Activated B cell treated with CpG ODN at 0.5 μM for 24 hours (primary cell): ENCODE measurements at regions of chr1 and their contacts with region 1.

Region 1: GRCh38 chr1:36149237-36149972 is at the start of gene TRAPPC3:
- DNase-seq: peak; percentile 96
- ATAC-seq: peak; percentile 89
- H3K4me3 Mint-ChIP-seq: peak within 1 kb of the TSS; percentile 94
- H3K27ac Mint-ChIP-seq: peak within 1 kb of the TSS; percentile 95
- H3K4me1 Mint-ChIP-seq: peaks cover 55% of the 10 kb centered on the region
- H3K27me3 Mint-ChIP-seq: no peaks in the 10 kb centered on the region
- CTCF ChIP-seq: no peak
- total RNA-seq, gene TRAPPC3: 45.3 and 48.5 TPM in 2 replicates

Region 2: DNA sequence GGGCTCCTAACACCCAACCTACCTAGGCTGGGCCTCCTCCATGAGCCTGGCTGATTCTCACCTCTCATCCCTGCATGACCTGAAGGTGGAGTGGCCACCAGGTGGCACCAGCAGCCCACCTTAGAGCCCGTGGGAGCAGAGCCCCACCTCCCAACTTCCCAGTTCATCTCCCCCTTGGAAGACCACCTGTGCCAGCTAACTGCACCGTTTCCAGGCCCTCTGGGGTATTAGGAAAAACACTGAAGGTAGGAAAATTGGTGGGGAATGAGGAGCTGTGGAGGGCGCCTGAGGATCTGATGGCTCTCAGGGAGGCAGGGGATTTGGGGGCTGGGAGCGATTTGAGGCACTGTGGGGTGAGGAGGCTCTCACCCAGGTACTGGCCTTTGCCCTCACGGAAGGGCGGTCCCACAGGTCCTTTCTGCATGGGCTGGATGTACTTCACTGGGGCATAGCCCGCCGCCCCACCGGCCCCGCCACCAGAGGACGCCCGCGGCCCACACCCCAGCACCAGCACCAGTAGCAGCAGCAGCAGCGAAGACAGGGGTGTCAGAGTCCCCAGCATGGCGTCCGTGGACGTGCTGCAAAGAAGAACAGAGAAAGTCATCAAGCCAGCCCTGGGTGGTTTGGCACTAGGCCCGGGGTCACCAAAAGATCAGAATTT is 49.6 kb before region 1 on chr1:
- CTCF ChIA-PET with region 1: interaction called, 11 read pairs
- POLR2A ChIA-PET with region 1: no interaction called
- intact Hi-C with region 1: no loop called
- DNase-seq: peak; percentile 67
- ATAC-seq: peak; percentile 86
- H3K4me3 Mint-ChIP-seq: no peak overlapping the region
- H3K27ac Mint-ChIP-seq: no peak overlapping the region
- H3K4me1 Mint-ChIP-seq: peaks cover 3% of the 10 kb centered on the region
- H3K27me3 Mint-ChIP-seq: no peaks in the 10 kb centered on the region
- CTCF ChIP-seq: no peak

Region 3: DNA sequence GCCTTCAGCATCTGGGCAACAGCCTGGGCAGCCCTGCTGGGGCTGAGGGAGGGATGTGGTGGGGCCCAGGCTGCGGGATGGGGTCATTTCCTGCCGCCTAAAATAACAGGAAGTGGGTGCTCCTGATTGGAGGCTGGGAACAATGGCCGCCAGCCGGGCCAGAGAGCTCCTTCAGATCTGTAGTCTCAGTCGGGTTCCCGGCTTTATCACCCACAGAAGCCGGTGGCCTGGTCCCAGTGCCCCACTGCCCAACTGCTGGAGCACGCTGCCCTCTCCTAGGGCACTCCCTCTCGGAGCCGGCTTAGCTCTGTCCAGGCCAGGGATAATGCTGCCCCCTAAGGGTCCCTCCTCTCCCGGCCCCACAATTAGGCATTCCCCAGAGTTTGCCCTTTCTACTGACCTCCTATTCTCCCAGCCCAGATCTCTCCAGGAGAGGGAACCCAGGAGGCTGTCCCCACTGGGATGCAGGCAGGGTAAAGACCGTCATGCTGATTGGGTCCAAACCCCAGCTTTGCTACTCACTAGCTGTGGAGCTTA is 11.6 kb after region 1 on chr1:
- CTCF ChIA-PET with region 1: interaction called, 48 read pairs
- POLR2A ChIA-PET with region 1: interaction called, 95 read pairs
- intact Hi-C with region 1: loop called (anchors 1 kb)
- DNase-seq: no peak
- ATAC-seq: no peak
- H3K4me3 Mint-ChIP-seq: peak overlapping the region; percentile 65
- H3K27ac Mint-ChIP-seq: peak overlapping the region; percentile 92
- H3K4me1 Mint-ChIP-seq: peaks cover 69% of the 10 kb centered on the region
- H3K27me3 Mint-ChIP-seq: no peaks in the 10 kb centered on the region
- CTCF ChIP-seq: no peak

Region 4: DNA sequence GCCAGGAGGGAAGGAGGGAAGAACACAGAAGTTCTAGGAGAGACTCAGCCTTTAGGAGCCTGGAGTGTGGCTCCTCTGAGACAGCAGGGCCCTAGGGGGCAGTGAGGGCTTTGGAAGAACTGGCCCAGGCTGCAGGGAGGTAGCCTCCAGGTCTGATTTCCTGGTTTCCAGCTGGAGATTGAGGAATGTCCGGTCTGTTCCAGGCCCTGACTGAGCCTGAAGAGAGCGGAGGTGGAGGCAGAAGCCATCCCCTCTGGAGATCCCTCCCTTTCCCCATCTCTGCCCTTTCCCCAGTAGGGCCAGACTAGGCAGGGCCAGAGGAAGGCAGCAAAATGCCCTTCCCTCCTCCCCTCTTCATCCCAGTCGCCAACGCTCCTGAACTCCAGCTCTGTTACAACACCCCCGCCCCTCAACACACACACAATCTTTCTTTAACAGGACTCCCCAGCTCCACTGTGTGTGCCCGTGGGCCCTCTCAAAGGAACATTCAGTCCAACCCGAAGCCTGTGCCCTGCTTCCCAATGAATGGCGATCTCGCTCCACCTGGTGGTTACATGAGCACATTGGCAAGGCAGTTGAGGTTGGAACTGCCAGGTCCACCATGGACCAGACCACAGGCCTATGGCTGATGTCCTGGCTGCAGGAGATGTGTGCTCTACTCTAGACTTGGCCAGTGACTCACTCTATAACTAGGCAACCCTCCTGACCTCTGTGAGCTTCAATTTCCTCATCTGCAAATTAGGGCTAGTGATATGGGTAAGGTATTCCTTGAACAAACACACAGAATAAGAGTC is 38.6 kb after region 1 on chr1:
- CTCF ChIA-PET with region 1: interaction called, 115 read pairs
- POLR2A ChIA-PET with region 1: interaction called, 54 read pairs
- intact Hi-C with region 1: loop called (anchors 1 kb)
- DNase-seq: peak; percentile 58
- ATAC-seq: peak; percentile 99
- H3K4me3 Mint-ChIP-seq: no peak overlapping the region
- H3K27ac Mint-ChIP-seq: no peak overlapping the region
- H3K4me1 Mint-ChIP-seq: peaks cover 3% of the 10 kb centered on the region
- H3K27me3 Mint-ChIP-seq: no peaks in the 10 kb centered on the region
- CTCF ChIP-seq: no peak

Region 5: DNA sequence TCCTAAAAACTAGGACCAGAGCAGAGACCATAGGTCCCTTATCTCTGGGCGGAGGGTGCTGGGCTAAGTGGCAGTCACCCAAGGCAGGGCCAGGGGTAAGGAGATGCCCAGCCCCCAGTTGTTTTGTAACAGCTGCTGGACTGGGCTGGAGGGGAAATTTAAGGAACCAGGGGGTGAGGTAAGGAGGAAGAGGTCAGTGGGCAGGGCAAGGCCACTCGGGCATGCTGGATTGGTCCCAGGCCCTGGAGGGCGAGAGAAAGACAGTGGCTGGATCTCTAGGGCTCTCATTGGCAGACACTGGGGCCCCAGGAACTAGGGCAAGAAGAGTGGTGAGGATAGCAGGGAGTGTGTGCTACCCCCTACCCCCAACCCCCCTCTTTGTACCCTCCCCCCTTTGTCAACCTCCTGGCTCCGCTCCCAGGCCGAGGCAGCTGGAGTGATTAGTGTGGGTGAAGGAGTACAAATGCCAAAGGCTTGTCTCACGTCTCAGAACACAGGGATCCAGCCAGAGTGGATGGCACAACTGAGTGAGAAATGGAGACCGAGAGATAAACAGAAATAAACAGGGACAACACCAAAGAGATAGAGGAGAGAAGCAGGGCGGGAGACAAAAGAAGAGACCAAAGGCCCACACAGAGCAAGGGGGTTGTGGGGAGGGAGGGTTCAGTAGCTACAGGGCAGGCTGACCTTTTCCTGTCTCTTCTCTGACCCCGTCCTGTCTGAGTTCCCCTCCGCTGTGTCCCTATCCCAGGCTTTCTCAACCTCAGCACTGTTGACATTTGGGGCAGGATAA is 54.3 kb after region 1 on chr1:
- CTCF ChIA-PET with region 1: no interaction called
- POLR2A ChIA-PET with region 1: no interaction called
- intact Hi-C with region 1: no loop called
- DNase-seq: no peak
- ATAC-seq: no peak
- H3K4me3 Mint-ChIP-seq: no peak overlapping the region
- H3K27ac Mint-ChIP-seq: no peak overlapping the region
- H3K4me1 Mint-ChIP-seq: peaks cover 11% of the 10 kb centered on the region
- H3K27me3 Mint-ChIP-seq: peaks cover 4% of the 10 kb centered on the region
- CTCF ChIP-seq: no peak

Region 6: GRCh38 chr1:36285448-36286101 is 136.2 kb after region 1 on chr1:
- CTCF ChIA-PET with region 1: interaction called, 52 read pairs
- POLR2A ChIA-PET with region 1: interaction called, 17 read pairs
- intact Hi-C with region 1: loop called (anchors 1 kb)
- DNase-seq: no peak
- ATAC-seq: peak; percentile 92
- H3K4me3 Mint-ChIP-seq: no peak overlapping the region
- H3K27ac Mint-ChIP-seq: peak overlapping the region; percentile 59
- H3K4me1 Mint-ChIP-seq: peaks cover 11% of the 10 kb centered on the region
- H3K27me3 Mint-ChIP-seq: no peaks in the 10 kb centered on the region
- CTCF ChIP-seq: no peak

Region 7: DNA sequence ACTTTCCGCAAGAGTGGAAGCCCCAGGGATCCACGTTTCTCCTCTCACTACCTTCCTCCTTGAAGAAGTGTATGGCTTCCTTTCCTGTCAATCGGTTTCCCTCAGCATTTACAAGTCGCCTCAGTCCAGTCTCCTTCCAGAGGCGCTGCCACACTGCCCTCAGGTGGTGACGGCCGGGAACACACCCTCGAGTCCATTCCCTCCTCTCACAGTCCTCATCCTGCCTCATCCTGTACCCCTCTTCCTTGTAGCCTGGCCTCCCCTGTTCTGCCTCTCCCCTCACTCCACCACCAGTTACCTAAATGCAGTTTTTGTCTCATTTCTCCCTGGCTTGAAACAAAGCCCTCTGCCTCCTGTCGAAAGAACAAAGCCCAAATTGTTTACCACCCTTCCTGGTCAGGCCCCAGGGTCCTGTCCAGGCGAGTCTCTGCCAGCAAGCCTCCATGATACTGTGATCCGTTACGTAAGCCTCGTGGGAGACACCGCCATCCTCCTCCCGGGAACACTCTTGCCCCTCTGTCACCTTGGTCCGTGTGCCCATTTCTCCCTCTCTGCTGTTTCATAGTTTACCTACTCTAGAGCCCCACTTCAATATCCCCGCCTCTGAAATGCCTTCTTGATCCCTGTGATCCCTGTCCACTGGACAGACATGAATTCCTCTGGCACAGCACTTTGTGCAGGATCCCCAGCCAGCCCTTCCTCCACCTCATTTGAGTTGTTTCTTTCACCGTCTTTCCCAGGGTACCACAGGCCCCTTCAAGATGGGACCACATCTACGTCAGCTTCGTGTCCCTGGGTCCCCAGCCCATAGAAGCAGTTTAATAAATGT is 271.6 kb after region 1 on chr1:
- CTCF ChIA-PET with region 1: interaction called, 8 read pairs
- POLR2A ChIA-PET with region 1: no interaction called
- intact Hi-C with region 1: loop called (anchors 1 kb)
- DNase-seq: peak; percentile 85
- ATAC-seq: peak; percentile 100
- H3K4me3 Mint-ChIP-seq: peak overlapping the region; percentile 20
- H3K27ac Mint-ChIP-seq: peak overlapping the region; percentile 56
- H3K4me1 Mint-ChIP-seq: peaks cover 7% of the 10 kb centered on the region
- H3K27me3 Mint-ChIP-seq: no peaks in the 10 kb centered on the region
- CTCF ChIP-seq: peak; percentile 44

Region 8: DNA sequence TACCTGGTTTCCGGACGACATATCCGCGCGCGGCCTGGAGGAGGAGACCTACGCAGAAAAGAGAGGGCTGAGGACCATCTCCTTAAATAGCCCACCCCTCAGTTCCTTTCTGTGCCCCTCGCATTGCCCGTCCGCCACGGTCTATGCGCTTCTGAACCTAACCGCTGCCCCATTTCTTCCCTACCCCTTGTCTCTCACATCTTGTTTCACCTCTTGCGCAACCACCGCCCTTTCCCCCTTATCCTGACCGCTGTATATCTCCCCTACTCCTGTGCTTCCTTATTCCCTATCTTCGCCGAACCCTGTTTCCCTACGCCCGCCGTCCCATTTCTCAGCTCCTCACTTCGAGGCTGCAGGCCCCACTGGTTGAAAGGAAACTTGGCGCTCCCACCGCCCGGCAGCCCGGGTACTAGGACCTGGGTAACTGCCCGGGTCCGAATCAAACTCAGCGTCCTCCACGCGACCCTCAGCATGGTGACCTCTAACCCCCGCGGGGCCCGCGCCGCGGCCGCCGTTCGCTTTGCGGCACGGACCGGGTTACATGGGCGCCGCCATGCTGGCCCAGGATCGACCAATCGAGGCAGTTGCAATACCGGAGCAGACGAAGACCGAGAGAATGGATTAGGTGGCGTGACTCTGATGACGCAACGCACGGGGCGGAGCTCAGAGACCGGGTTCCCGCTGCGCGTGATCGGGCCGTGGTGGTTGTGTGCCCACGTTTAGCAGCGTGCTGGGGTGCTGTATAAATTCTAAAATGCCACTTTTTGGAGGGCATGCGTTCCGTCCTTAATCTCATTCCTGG is 314.6 kb after region 1 on chr1 and contains the start of gene MRPS15:
- CTCF ChIA-PET with region 1: no interaction called
- POLR2A ChIA-PET with region 1: interaction called, 3 read pairs
- intact Hi-C with region 1: loop called (anchors 1 kb)
- DNase-seq: peak; percentile 90
- ATAC-seq: peak; percentile 95
- H3K4me3 Mint-ChIP-seq: peak within 1 kb of the TSS; percentile 96
- H3K27ac Mint-ChIP-seq: peak within 1 kb of the TSS; percentile 98
- H3K4me1 Mint-ChIP-seq: peaks cover 27% of the 10 kb centered on the region
- H3K27me3 Mint-ChIP-seq: no peaks in the 10 kb centered on the region
- CTCF ChIP-seq: no peak
- total RNA-seq, gene MRPS15: 63.5 and 67.0 TPM in 2 replicates